K562 (cell line): ENCODE measurements at regions of chr15 and their contacts with region 1.

Region 1: DNA sequence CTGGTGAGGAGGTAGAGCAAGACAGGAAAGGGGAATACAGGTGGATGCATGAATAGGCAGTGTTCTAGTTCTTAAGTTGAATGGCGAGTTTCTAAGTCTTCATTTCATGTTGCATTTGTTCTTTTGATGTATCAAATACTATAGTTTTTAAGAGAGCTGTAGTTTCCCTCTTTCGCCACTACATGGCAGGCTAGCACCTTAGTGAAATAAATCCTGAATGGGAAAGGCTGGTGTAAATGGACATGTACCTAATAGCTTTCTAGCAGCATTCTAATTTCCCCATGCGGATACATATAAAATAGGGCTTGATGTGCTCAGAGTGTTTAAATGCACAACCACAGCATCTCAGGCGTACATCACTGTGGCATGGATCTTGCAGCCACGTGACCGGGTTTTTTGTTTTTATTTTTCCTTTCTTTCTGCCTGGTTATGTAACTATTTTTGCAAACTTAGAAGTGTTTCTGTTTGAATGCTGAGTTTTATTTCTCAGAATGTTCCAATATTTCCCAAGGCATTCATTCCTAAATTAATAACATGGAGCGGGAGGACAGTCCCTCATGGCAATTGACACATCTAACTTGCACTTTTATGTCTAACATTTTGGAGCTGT is 23.5 kb upstream of the CLN6 start:
- DNase-seq: peak; percentile 43 to 77 (median 55)
- ATAC-seq: peak; percentile 90
- H3K4me3 ChIP-seq: no peak overlapping the region
- H3K27ac ChIP-seq: no peak overlapping the region
- H3K4me1 ChIP-seq: peaks cover 0 to 12% of the 10 kb centered on the region in 2 experiments; a peak in 3 of 5 replicates
- H3K27me3 ChIP-seq: peaks cover 12 to 19% of the 10 kb centered on the region in 2 experiments
- CTCF ChIP-seq: peak; percentile 74 to 93 (median 81)
- EP300 ChIP-seq: no peak
- POLR2A ChIP-seq: no peak
- RAD21 ChIP-seq: peak; percentile 73 to 87

Region 2: GRCh38 chr15:68383161-68384074 is 130.4 kb after region 1 on chr15:
- CTCF ChIA-PET with region 1: no interaction called
- POLR2A ChIA-PET with region 1: no interaction called
- in situ Hi-C with region 1: no loop called
- intact Hi-C with region 1: loop called (anchors 2 kb)
- DNase-seq: peak; percentile 53 to 74 (median 66)
- ATAC-seq: peak; percentile 61; the same call in 1 of the 3 replicates
- H3K4me3 ChIP-seq: no peak overlapping the region
- H3K27ac ChIP-seq: no peak overlapping the region
- H3K4me1 ChIP-seq: no peaks in the 10 kb centered on the region
- H3K27me3 ChIP-seq: peaks cover 0 to 29% of the 10 kb centered on the region in 2 experiments; a peak in 3 of 5 replicates
- CTCF ChIP-seq: peak; percentile 60 to 70 (median 63)
- EP300 ChIP-seq: no peak
- POLR2A ChIP-seq: no peak
- RAD21 ChIP-seq: peak; percentile 36 to 64

Region 3: DNA sequence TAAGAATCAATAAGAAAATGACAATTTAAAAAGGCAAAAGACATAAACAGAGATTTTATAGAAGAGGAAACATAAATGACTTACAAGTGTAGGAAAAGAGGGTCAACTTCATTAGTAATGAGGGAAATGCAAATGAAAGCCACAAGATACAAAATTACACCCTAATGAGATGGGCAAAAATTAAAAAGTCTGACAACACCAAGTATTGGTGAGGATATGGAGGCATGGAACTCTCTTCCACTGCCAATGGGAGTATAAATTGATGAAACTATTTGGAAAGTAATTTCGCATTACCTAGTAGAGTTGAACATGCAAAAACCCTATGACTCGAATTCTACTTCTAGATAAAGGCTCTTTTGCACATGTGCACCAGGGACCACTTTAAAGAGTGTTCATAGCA is 207.1 kb after region 1 on chr15:
- CTCF ChIA-PET with region 1: no interaction called
- POLR2A ChIA-PET with region 1: no interaction called
- in situ Hi-C with region 1: no loop called
- intact Hi-C with region 1: no loop called
- DNase-seq: no peak
- ATAC-seq: no peak
- H3K4me3 ChIP-seq: no peak overlapping the region
- H3K27ac ChIP-seq: no peak overlapping the region
- H3K4me1 ChIP-seq: peaks cover 0 to 17% of the 10 kb centered on the region in 2 experiments; a peak in 3 of 5 replicates
- H3K27me3 ChIP-seq: no peaks in the 10 kb centered on the region; a peak in 1 of 5 replicates
- CTCF ChIP-seq: no peak
- EP300 ChIP-seq: no peak
- POLR2A ChIP-seq: no peak
- RAD21 ChIP-seq: no peak

Region 4: DNA sequence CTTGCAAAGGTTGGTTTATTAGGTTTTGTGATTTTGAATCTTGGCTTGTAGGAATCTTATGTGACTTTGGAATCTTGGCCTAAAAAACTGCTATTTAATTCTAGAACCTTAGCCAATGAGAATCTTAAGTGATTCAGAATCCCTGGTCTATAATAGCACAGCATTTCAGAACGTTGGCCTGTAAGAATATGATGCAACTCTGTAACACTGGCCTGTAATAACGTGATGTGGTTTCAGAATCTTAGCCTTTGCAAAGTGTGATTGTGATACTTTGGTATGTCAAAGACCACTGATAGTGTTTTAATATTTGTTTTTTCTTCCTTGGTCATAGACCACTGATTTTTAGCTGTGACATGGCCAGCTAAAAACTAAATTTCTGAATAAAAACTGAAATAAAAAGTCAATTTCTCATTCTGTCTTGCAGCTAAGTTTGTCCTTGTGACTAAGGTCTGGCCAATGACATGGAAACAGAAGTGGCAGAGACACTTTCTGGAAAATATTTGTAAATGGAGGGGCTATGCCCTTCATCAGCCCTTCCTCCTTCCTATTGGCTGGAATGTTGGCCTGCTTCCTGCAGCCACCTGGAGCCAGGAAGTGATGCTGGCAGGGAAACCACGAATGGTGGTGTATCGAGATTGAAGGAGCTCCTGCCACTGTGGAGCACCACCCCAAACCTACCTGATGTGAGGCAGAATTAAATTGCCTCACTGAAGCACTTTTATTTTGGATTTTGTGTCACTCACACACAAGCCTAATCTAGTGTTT is 283.5 kb after region 1 on chr15:
- CTCF ChIA-PET with region 1: no interaction called
- POLR2A ChIA-PET with region 1: no interaction called
- in situ Hi-C with region 1: no loop called
- intact Hi-C with region 1: loop called (anchors 5 kb)
- DNase-seq: no peak
- ATAC-seq: 0 out of 3 replicates have a peak, but pooled peaks have one; percentile 42
- H3K4me3 ChIP-seq: no peak overlapping the region
- H3K27ac ChIP-seq: no peak overlapping the region
- H3K4me1 ChIP-seq: no peaks in the 10 kb centered on the region
- H3K27me3 ChIP-seq: no peaks in the 10 kb centered on the region
- CTCF ChIP-seq: no peak
- EP300 ChIP-seq: peak; percentile 19; the same call in 1 of the 2 replicates
- POLR2A ChIP-seq: no peak
- RAD21 ChIP-seq: no peak